CD8-positive, alpha-beta T cell (primary cell): ENCODE measurements at regions of chr1 and their contacts with region 1.

Region 1: DNA sequence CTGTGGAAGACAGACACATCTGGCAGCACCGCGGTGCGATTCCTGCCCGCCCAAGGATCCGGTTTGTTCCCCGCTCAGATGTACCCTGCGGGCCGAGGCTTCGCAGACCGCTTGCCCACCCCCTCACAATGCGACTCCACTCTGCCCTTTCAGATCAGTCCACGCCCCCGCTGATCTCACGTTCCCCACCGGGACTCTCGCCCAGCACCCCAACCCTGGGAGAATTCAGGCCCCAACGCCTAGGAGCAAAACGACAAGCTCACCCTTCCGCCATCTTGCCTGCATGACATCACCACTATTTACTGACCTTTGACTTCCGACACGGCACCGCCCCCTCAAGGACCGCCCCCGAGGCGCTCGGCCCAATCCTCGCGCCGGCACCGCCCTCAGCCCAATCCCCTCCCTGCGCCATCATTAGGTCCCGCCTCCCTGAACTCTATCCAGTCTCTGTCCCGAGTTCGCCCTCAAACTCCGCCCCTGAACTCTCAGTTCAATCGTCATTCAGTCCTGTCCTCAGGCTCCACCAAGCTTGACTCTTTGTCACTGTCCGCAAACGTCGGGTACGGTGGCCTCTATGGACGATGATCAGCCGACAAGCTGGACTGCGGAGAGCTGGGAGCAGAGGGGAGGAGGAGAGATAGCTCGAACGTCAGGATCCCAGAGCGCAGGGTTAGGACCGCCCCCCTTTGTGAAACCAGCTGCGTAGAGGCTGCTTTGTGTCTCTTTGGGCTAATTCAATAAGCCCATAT is at the start of gene BSDC1:
- DNase-seq: peak; percentile 97 to 99 (median 98)
- ATAC-seq: peak; percentile 98
- H3K4me3 ChIP-seq: peak within 1 kb of the TSS; percentile 75 to 92
- H3K4me3 Mint-ChIP-seq: peak within 1 kb of the TSS; percentile 99
- H3K27ac ChIP-seq: peak within 1 kb of the TSS; percentile 86 to 98
- H3K27ac Mint-ChIP-seq: peak within 1 kb of the TSS; percentile 100
- H3K4me1 ChIP-seq: peaks cover 11% of the 10 kb centered on the region
- H3K4me1 Mint-ChIP-seq: peaks cover 31% of the 10 kb centered on the region
- H3K27me3 ChIP-seq: no peaks in the 10 kb centered on the region
- H3K27me3 Mint-ChIP-seq: no peaks in the 10 kb centered on the region
- CTCF ChIP-seq: no peak
- total RNA-seq, gene BSDC1: 189 to 201 TPM

Region 2: DNA sequence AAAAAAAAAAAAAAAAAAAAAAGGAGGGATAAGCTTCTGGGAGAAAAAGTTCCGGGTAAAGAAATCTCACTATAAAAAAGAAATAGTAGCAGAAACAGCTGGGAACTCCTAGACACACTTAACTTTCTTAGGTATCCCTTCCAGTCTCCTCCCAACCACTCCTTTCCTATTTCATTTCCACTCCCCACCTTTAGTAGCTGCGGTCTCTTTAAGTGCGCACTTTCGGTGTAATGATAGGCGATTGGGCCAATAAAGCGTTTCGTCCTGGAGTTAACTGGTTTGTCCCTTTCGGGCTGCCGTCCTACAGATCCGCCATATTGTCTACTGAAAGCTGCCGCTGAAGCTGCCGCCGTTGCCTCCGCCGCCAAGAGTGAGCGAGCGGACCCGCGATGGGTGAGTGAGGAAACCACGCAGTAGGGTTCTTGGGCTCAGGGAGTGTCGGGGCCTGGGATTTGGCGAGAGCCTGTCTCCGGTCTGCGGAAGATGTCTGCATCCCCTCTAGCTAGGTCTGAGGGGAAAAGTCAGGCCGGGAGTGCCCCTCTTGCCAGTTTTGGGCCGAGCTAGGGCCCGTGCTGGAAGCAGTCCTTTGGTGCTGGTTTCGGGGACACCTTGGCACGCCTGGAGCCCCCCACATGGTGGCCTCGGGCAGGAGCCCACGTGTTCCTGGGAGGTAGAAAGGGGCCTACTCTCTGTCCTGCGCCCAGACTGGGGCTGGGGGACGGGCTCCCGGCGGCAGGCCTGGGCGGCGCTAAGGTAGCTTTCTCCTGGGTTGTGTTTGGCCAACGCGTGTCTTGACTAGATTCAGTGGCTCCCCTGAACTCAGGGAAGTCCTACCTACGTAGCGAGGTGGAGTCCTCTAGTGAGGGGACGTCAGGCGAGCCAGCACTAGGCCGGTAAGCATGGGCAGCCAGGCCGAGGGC is 286.3 kb before region 1 on chr1 and contains the start of gene KPNA6:
- CTCF ChIA-PET with region 1: no interaction called
- POLR2A ChIA-PET with region 1: interaction called, 6 read pairs
- intact Hi-C with region 1: loop called (anchors 1 kb)
- DNase-seq: peak; percentile 83 to 98 (median 90)
- ATAC-seq: peak; percentile 89
- H3K4me3 ChIP-seq: peak within 1 kb of the TSS; percentile 87 to 95
- H3K4me3 Mint-ChIP-seq: peak within 1 kb of the TSS; percentile 98
- H3K27ac ChIP-seq: peak within 1 kb of the TSS; percentile 84 to 93
- H3K27ac Mint-ChIP-seq: peak within 1 kb of the TSS; percentile 98
- H3K4me1 ChIP-seq: peaks cover 45% of the 10 kb centered on the region
- H3K4me1 Mint-ChIP-seq: peaks cover 50% of the 10 kb centered on the region
- H3K27me3 ChIP-seq: no peaks in the 10 kb centered on the region
- H3K27me3 Mint-ChIP-seq: no peaks in the 10 kb centered on the region
- CTCF ChIP-seq: no peak
- total RNA-seq, gene KPNA6: 51.7 to 58.7 TPM

Region 3: DNA sequence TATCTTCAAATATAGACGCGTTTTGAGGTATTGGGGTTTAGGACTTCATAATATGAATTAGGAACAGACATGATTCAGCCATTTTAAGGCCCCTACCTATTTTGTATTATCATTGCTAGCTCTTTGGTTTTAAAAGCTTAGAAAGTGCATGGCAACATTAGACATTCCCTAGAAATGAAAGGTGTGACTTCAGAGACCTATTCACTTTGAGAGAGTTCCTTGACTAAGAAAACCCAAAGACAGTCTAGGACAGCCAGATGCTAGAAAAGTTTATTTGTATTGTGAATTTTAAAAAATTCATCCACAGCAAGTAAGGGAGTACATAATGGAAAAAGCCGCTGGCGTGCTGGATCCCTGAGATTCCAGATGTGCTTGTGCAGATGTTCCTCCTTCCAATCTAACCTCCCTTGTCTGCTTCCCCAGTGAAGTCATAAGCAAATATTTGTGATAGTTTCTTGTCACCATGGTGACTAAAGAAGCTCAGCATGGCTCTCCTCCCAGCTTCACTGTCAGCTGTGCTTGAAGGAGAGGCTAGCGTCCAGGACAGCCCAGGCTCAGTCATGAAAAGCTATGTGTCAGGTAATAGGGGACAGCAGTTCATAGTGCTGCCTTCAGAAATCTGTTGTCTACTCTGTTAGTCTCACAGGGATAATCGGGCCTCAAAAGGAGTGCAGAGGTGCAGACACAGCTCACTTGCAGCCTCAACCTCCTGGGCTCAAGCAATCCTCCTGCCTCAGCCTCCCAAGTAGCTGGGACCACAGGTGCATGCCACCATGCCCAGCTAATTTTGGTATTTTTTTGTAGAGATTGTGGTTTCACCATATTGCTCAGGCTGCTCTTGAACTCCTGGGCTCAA is 251.6 kb before region 1 on chr1:
- CTCF ChIA-PET with region 1: no interaction called
- POLR2A ChIA-PET with region 1: no interaction called
- intact Hi-C with region 1: no loop called
- DNase-seq: no peak
- ATAC-seq: no peak
- H3K4me3 ChIP-seq: no peak overlapping the region
- H3K4me3 Mint-ChIP-seq: no peak overlapping the region
- H3K27ac ChIP-seq: no peak overlapping the region
- H3K27ac Mint-ChIP-seq: peak overlapping the region; percentile 53
- H3K4me1 ChIP-seq: peaks cover 10% of the 10 kb centered on the region
- H3K4me1 Mint-ChIP-seq: peaks cover 61% of the 10 kb centered on the region
- H3K27me3 ChIP-seq: no peaks in the 10 kb centered on the region
- H3K27me3 Mint-ChIP-seq: no peaks in the 10 kb centered on the region
- CTCF ChIP-seq: no peak

Region 4: GRCh38 chr1:32179443-32180185 is 214.7 kb before region 1 on chr1 and contains the start of gene TXLNA:
- CTCF ChIA-PET with region 1: no interaction called
- POLR2A ChIA-PET with region 1: no interaction called
- intact Hi-C with region 1: loop called in 1 of 2 experiments (anchors 1 kb)
- DNase-seq: peak; percentile 66 to 93 (median 88)
- ATAC-seq: peak; percentile 88
- H3K4me3 ChIP-seq: peak within 1 kb of the TSS; percentile 67 to 85
- H3K4me3 Mint-ChIP-seq: peak within 1 kb of the TSS; percentile 84
- H3K27ac ChIP-seq: peak within 1 kb of the TSS; percentile 70 to 89
- H3K27ac Mint-ChIP-seq: peak within 1 kb of the TSS; percentile 93
- H3K4me1 ChIP-seq: peaks cover 26% of the 10 kb centered on the region
- H3K4me1 Mint-ChIP-seq: peaks cover 44% of the 10 kb centered on the region
- H3K27me3 ChIP-seq: no peaks in the 10 kb centered on the region
- H3K27me3 Mint-ChIP-seq: no peaks in the 10 kb centered on the region
- CTCF ChIP-seq: no peak
- total RNA-seq, gene TXLNA: 7.5 to 8.9 TPM

Region 5: DNA sequence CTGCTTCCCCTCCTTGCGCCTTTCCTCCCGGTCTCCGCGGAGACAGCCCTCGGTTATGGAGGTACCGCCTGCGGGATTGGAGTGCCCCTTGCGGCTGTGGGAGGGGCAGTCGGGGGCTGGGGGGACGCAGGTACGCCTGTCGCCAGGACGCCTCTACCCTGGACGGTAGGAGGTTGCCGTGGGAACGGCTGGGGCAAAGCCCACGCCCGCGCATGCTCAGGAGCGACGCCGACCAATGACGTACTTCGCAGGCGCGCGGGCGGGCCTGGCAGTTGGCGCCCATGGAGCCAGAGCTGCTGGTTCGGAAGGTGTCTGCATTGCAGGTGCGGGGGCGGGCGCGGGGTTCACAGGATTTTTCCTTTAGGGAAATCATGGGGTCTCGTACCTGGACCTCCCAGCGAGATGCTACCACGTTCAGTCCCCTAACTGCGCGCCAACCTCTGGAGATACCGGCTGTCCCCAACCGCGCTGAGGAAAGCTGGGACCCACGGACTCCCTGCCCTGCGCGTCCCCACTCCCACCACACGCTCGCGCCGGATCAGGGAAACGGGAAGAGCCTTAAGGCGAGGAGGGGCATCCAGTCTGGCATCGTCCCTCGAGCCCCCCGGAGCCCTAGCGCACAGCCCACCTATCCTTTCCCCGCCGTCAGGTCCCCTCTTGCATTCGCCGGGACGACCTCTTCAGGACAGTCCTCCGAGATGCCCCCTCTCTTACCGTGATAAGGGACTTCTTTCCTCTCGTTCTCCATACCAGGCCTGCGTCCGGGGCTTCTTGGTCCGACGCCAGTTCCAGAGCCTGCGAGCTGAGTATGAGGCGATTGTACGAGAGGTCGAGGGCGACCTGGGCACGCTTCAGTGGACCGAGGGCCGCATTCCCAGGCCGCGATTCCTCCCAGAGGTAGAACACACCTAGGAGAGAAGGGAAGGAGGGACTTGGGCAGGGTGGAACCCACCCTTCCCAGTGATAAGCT is 188.6 kb before region 1 on chr1 and contains the start of gene IQCC:
- CTCF ChIA-PET with region 1: no interaction called
- POLR2A ChIA-PET with region 1: interaction called, 6 read pairs
- intact Hi-C with region 1: loop called in 1 of 2 experiments (anchors 5 kb)
- DNase-seq: peak; percentile 68 to 94 (median 85)
- ATAC-seq: peak; percentile 57
- H3K4me3 ChIP-seq: peak within 1 kb of the TSS; percentile 65 to 77
- H3K4me3 Mint-ChIP-seq: peak within 1 kb of the TSS; percentile 87
- H3K27ac ChIP-seq: peak within 1 kb of the TSS; percentile 62 to 67
- H3K27ac Mint-ChIP-seq: peak within 1 kb of the TSS; percentile 84
- H3K4me1 ChIP-seq: peaks cover 30% of the 10 kb centered on the region
- H3K4me1 Mint-ChIP-seq: peaks cover 36% of the 10 kb centered on the region
- H3K27me3 ChIP-seq: no peaks in the 10 kb centered on the region
- H3K27me3 Mint-ChIP-seq: no peaks in the 10 kb centered on the region
- CTCF ChIP-seq: no peak
- total RNA-seq, gene IQCC: 1.3 to 2.0 TPM

Region 6: GRCh38 chr1:32321712-32322291 is 72.5 kb before region 1 on chr1:
- CTCF ChIA-PET with region 1: interaction called, 4 read pairs
- POLR2A ChIA-PET with region 1: interaction called, 10 read pairs
- intact Hi-C with region 1: no loop called
- DNase-seq: peak in 7 of 9 experiments; percentile 11 to 72 (median 43)
- ATAC-seq: peak; percentile 87
- H3K4me3 ChIP-seq: peak overlapping the region in 1 of 2 experiments; percentile 6
- H3K4me3 Mint-ChIP-seq: peak overlapping the region; percentile 56
- H3K27ac ChIP-seq: peak overlapping the region; percentile 29 to 41
- H3K27ac Mint-ChIP-seq: peak overlapping the region; percentile 81
- H3K4me1 ChIP-seq: peaks cover 38% of the 10 kb centered on the region
- H3K4me1 Mint-ChIP-seq: peaks cover 38% of the 10 kb centered on the region
- H3K27me3 ChIP-seq: no peaks in the 10 kb centered on the region
- H3K27me3 Mint-ChIP-seq: no peaks in the 10 kb centered on the region
- CTCF ChIP-seq: no peak

Region 7: DNA sequence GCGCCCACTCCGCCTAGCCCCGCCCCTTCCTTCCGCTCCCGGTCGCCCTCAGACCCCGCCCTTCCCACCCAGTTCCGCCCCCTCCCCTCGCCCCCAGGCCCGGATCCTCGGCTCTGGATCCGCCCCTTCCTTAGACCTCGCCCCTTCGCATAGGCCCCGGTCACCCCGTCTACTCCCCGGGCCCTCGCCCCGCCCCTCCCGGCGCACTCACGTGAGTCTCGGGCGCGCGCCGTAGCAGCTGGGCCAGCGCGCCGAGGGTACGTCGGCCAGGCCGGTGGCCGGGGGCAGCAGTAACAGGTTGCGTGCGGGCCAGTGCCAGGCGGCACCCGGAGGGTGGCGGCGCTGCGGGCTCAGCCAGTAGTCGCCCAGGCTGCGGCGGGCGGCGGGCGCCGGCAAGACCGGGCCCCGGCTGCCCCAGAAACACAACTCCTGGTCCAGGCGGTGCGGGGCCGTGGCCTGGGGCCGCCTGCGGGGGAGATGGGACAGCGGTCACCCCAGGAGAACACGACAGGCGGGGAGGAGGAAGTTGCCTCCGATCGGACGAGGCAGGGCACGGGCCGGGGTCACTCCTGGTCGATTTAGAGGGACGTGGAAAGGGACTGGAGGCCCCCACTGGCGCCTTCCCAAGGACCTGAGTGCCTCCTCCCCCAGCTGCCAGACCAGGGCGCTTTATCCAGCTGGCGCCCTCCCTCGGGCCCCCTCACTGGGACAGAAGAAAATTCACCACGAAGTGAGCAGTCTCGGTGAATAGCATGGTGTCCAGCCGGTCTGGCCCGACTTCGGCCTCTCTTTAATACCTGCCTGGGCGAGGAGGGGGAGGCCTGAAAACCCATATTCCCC is 42.7 kb before region 1 on chr1:
- CTCF ChIA-PET with region 1: no interaction called
- POLR2A ChIA-PET with region 1: interaction called, 8 read pairs
- intact Hi-C with region 1: loop called (anchors 1 kb)
- DNase-seq: peak; percentile 81 to 97 (median 90)
- ATAC-seq: peak; percentile 95
- H3K4me3 ChIP-seq: peak overlapping the region; percentile 57 to 85
- H3K4me3 Mint-ChIP-seq: peak overlapping the region; percentile 81
- H3K27ac ChIP-seq: peak overlapping the region; percentile 60 to 69
- H3K27ac Mint-ChIP-seq: peak overlapping the region; percentile 49
- H3K4me1 ChIP-seq: peaks cover 30% of the 10 kb centered on the region
- H3K4me1 Mint-ChIP-seq: peaks cover 49% of the 10 kb centered on the region
- H3K27me3 ChIP-seq: no peaks in the 10 kb centered on the region
- H3K27me3 Mint-ChIP-seq: no peaks in the 10 kb centered on the region
- CTCF ChIP-seq: no peak

Region 8: GRCh38 chr1:32464716-32465577 is 70.6 kb after region 1 on chr1 and contains the start of gene ZBTB8B:
- CTCF ChIA-PET with region 1: no interaction called
- POLR2A ChIA-PET with region 1: no interaction called
- intact Hi-C with region 1: no loop called
- DNase-seq: peak in 6 of 9 experiments; percentile 16 to 57 (median 38)
- ATAC-seq: peak; percentile 73
- H3K4me3 ChIP-seq: peak within 1 kb of the TSS; percentile 21 to 44
- H3K4me3 Mint-ChIP-seq: peak within 1 kb of the TSS; percentile 74
- H3K27ac ChIP-seq: no peak within 1 kb of the TSS
- H3K27ac Mint-ChIP-seq: no peak within 1 kb of the TSS
- H3K4me1 ChIP-seq: peaks cover 16% of the 10 kb centered on the region
- H3K4me1 Mint-ChIP-seq: peaks cover 18% of the 10 kb centered on the region
- H3K27me3 ChIP-seq: peaks cover 13 to 16% of the 10 kb centered on the region in 2 experiments
- H3K27me3 Mint-ChIP-seq: peaks cover 58% of the 10 kb centered on the region
- CTCF ChIP-seq: no peak
- total RNA-seq, gene ZBTB8B: not detected